T-cell (primary cell): ENCODE measurements at regions of chr6 and their contacts with region 1.

Region 1: DNA sequence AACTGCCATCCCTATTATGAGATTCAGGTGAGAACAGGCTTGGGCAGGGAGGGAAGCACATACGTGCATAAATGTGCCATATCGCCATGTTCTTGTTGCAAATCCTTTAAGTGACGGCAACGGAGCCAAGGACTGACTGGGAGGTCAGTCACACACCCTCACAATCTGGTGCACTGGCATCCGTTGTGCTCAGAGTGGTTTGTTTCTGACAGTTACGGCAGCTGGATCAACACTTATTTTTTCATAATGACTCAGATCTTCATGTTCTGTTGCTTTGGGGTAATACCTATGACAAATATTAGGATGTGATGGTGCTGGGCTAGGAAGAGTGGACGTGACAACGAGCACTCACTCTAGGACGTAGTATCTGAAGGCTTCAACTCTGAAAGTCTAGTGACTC is 56.2 kb upstream of the PREP start:
- DNase-seq: peak in 23 of 35 experiments; percentile 4 to 61 (median 13)
- ATAC-seq: peak; percentile 27 to 73 (median 54)
- H3K4me3 ChIP-seq: peak overlapping the region in 1 of 2 donors; percentile 27
- H3K4me3 Mint-ChIP-seq: peak overlapping the region; percentile 29 to 59 (median 44)
- H3K27ac ChIP-seq: peak overlapping the region; percentile 84
- H3K27ac Mint-ChIP-seq: peak overlapping the region; percentile 40 to 85
- H3K4me1 ChIP-seq: peaks cover under 1 to 22% of the 10 kb centered on the region in 2 experiments
- H3K4me1 Mint-ChIP-seq: peaks cover 7 to 46% (median 11%) of the 10 kb centered on the region in 3 donors
- H3K27me3 ChIP-seq: no peaks in the 10 kb centered on the region
- H3K27me3 Mint-ChIP-seq: peaks cover 15 to 24% of the 10 kb centered on the region in 2 donors

Region 2: GRCh38 chr6:104736545-104736944 is 722.5 kb before region 1 on chr6:
- CTCF ChIA-PET with region 1: no interaction called
- POLR2A ChIA-PET with region 1: interaction called in 1 of 2 experiments, 10 read pairs
- DNase-seq: no peak
- ATAC-seq: no peak
- H3K4me3 ChIP-seq: no peak overlapping the region
- H3K4me3 Mint-ChIP-seq: no peak overlapping the region
- H3K27ac ChIP-seq: no peak overlapping the region
- H3K27ac Mint-ChIP-seq: no peak overlapping the region
- H3K4me1 ChIP-seq: no peaks in the 10 kb centered on the region
- H3K4me1 Mint-ChIP-seq: no peaks in the 10 kb centered on the region
- H3K27me3 ChIP-seq: no peaks in the 10 kb centered on the region
- H3K27me3 Mint-ChIP-seq: no peaks in the 10 kb centered on the region

Region 3: DNA sequence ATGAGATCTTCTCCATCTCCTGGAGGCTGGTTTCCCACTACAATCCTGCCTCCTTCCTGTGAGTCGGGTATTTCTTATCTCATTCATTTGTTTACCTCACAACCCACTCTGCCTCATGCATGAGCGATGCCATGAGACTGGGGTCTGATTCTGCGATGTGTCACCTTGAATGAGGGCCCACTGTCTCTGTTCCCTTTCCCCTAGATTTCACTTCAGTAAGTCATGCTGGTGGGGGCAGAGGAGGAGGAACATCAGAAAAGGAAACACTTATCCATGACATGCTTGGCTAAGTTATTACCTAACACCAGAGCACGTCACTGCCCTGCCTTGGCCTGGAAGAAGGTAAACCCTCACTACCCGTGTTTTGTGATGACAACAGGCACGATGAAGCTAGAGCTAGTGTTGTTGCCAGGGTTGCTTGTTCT is 289.7 kb after region 1 on chr6:
- CTCF ChIA-PET with region 1: no interaction called
- POLR2A ChIA-PET with region 1: no interaction called
- DNase-seq: peak in 1 of 35 experiments; percentile 1
- ATAC-seq: no peak
- H3K4me3 ChIP-seq: no peak overlapping the region
- H3K4me3 Mint-ChIP-seq: no peak overlapping the region
- H3K27ac ChIP-seq: no peak overlapping the region
- H3K27ac Mint-ChIP-seq: no peak overlapping the region
- H3K4me1 ChIP-seq: no peaks in the 10 kb centered on the region
- H3K4me1 Mint-ChIP-seq: peaks cover 0 to 10% (median 9%) of the 10 kb centered on the region in 3 donors
- H3K27me3 ChIP-seq: peaks cover 0 to under 1% of the 10 kb centered on the region in 2 experiments
- H3K27me3 Mint-ChIP-seq: no peaks in the 10 kb centered on the region